AG04450 (cell line): ENCODE measurements at regions of chr3 and their contacts with region 1.

Region 1: DNA sequence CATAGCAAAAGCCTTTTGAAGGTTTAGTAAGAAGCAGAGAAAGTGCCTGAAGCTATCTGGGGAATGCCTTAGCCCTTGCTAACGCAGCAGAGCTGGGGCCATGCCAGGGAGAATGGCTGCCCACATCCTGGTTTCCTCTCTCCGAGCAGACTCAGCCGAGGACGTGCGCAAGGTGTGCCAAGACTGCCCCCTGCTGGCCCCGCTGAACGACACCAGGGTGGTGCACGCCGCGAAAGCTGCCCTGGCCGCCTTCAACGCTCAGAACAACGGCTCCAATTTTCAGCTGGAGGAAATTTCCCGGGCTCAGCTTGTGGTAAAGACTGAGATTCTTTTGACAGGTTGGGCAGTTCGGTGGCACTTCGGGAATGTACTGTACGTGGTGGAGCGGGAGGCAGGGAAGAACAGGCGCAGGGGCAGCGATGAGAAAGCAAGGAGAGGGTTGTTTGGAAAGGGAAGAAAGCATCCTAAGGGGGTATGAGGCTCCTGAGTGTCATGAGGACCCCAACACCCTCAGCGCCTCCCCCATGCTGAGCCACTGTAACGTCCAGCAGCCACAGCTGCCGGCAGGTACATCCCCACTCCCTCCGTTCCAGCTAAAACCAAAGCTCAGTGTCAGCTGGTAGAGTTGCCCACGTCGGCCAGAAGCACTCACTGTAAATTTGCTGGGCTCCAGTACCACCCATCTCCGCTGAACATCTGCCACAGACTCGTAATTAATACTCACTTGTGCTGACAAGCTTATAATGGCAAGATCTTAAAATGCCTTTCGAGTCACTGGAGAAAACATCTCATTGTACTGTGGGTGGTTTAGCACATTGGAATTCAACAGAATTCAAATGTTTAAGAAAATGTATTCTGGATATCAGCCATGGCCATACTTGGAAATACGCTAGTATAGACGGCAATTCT is 4.4 kb downstream of the AHSG start:
- DNase-seq: peak; percentile 93
- H3K4me3 ChIP-seq: peak overlapping the region; percentile 49
- H3K27ac ChIP-seq: no peak overlapping the region
- H3K27me3 ChIP-seq: peaks cover 12% of the 10 kb centered on the region
- CTCF ChIP-seq: peak; percentile 92

Region 2: GRCh38 chr3:186514296-186515002 is 102.8 kb before region 1 on chr3:
- CTCF ChIA-PET with region 1: no interaction called
- POLR2A ChIA-PET with region 1: no interaction called
- DNase-seq: no peak
- H3K4me3 ChIP-seq: no peak overlapping the region
- H3K27ac ChIP-seq: no peak overlapping the region
- H3K27me3 ChIP-seq: peaks cover 15% of the 10 kb centered on the region
- CTCF ChIP-seq: peak; percentile 42

Region 3: DNA sequence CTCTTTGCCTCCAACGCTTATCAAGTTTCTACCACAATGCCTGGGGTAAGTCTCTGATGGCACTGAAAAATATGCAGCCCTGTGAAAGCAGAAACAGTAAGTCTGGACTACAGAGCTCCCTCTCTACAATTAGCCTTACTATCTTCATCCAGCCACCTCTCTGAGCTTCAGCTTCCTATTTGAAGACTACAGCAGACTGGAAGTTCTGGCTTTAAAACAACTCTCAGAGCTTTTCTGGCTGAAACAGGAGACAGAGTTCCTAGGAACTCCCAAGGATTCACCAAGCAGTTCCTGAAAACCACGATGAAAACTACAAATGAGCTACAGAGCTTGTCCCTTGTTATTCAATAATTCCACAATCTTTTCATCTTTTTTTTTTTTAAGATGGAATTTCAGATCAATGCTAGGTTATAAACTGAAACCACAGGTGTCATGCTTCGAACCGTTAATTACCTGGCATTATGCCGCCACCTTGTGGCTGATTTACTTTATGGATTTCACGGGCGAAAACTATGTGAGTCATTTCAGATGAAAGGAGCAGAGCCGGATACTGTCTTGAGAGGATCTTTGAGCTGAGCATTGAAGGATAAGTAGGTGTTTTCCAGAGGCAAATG is 77.0 kb before region 1 on chr3:
- CTCF ChIA-PET with region 1: interaction called, 18 read pairs
- POLR2A ChIA-PET with region 1: no interaction called
- DNase-seq: peak; percentile 29
- H3K4me3 ChIP-seq: no peak overlapping the region
- H3K27ac ChIP-seq: no peak overlapping the region
- H3K27me3 ChIP-seq: no peaks in the 10 kb centered on the region
- CTCF ChIP-seq: peak; percentile 69

Region 4: GRCh38 chr3:186583831-186584230 is 33.5 kb before region 1 on chr3:
- CTCF ChIA-PET with region 1: interaction called, 113 read pairs
- POLR2A ChIA-PET with region 1: no interaction called
- DNase-seq: no peak
- H3K4me3 ChIP-seq: no peak overlapping the region
- H3K27ac ChIP-seq: no peak overlapping the region
- H3K27me3 ChIP-seq: no peaks in the 10 kb centered on the region
- CTCF ChIP-seq: no peak

Region 5: GRCh38 chr3:186630950-186631641 is 13.8 kb after region 1 on chr3:
- CTCF ChIA-PET with region 1: interaction called, 43 read pairs
- POLR2A ChIA-PET with region 1: no interaction called
- DNase-seq: no peak
- H3K4me3 ChIP-seq: no peak overlapping the region
- H3K27ac ChIP-seq: no peak overlapping the region
- H3K27me3 ChIP-seq: no peaks in the 10 kb centered on the region
- CTCF ChIP-seq: no peak

Region 6: DNA sequence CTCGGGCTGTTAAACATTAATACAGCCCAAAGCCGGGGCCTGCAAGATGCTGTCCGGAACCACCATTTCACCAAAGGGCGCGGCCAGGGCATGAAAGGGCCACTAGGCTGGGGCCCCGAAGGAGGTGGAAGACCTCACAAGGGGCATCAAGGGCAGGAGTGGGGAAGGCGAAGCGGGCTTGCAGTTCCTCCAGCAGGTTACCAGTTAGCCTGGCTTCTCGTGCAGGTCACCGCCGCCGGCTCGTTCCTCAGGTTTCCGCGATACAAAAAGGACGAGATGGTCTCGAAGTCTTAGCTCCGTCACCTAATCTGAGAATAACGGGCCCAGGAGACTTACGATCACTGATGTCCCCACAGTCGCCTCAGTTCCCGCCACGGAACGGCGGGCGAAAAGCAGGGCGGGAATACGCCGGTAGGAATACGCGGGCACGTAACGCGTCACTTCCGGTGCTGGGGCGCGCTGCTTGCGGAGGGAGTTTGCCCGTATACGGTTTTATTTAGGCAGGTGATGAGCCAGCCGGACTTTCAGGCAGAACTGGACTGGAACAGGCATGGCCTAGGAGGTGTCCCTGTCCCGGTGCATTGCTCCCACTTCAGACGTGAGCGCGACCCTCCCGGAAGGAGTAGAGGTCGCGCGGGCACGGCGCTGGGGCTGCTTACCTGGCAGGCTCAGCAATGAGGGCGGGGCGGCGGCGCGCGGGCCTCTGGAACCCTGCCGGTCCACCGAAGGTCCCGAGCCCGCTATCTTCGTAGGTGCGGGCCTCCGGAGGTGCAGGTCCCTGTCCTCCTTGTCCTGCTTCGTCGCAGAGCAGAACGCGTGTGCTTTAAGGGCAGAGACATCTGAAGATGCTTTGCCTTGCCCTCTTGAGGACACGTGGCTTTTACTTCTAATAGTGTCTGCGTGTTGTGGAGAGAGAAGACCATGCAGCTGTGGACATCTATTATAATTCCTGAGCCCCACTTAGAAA is 189.1 kb after region 1 on chr3 and contains the start of gene RFC4:
- CTCF ChIA-PET with region 1: interaction called, 25 read pairs
- POLR2A ChIA-PET with region 1: no interaction called
- DNase-seq: no peak
- H3K4me3 ChIP-seq: peak within 1 kb of the TSS; percentile 88
- H3K27ac ChIP-seq: peak within 1 kb of the TSS; percentile 73
- H3K27me3 ChIP-seq: no peaks in the 10 kb centered on the region
- CTCF ChIP-seq: no peak
- polyA plus RNA-seq, gene RFC4: 7.3 and 9.4 TPM in 2 replicates

Region 7: DNA sequence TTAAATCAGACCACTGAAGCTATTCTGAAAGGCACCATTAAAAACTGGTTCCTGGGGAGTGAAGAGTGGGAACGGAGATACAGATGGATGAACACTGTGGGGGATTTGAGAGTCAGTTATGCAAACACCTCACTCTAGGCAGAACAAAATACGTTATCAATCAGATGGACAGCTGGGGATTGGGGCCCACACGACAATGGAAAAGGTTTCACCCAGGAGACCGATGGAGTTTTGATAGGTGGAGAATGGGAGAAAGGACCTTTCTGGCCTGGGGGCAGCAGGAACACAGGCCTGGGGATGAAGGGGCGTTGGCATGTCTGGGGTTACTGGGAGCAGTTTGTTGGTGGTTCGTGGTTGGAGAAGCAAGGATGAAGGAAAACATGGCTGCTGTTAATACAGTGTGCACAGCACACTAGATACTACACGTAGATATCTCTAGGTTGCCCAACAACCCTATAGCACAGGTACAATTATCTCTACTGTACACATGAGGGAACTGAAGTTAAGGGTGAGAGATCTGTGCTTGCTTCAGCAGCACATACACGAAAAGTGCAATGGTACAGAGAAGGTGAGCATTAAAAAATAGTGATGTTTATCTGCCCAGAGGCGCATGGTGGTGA is 329.6 kb after region 1 on chr3:
- CTCF ChIA-PET with region 1: no interaction called
- POLR2A ChIA-PET with region 1: no interaction called
- DNase-seq: no peak
- H3K4me3 ChIP-seq: no peak overlapping the region
- H3K27ac ChIP-seq: no peak overlapping the region
- H3K27me3 ChIP-seq: no peaks in the 10 kb centered on the region
- CTCF ChIP-seq: no peak

Region 8: GRCh38 chr3:187714404-187714979 is 1097.2 kb after region 1 on chr3:
- CTCF ChIA-PET with region 1: interaction called, 32 read pairs
- POLR2A ChIA-PET with region 1: no interaction called
- DNase-seq: peak; percentile 37
- H3K4me3 ChIP-seq: no peak overlapping the region
- H3K27ac ChIP-seq: no peak overlapping the region
- H3K27me3 ChIP-seq: peaks cover 7% of the 10 kb centered on the region
- CTCF ChIP-seq: peak; percentile 98